ENCODE measurements at regions of chr1 and their contacts with region 1.

Region 1: DNA sequence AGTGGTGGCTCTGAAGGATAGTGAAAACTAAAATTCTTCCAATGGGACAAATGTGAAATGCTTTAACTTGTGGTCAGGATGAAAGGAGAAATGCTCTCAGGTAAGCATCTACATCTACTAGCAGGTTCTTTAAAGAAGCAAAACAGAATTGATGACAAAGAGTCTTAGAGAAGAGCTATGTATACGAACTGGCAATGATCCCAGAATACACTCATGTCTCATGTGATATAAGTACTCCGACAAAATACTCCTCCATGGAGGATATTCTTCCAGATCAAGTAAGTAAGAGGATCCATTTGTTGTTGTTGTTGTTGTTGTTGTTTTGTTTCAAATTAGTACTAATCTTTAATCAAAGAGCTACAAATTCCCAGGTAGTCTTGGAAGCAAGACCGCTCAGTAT is 174.0 kb upstream of the ATP1B1 start:
- DNase-seq: no peak
- H3K4me3 ChIP-seq: no peak overlapping the region
- H3K27ac ChIP-seq: no peak overlapping the region
- H3K4me1 ChIP-seq: no peaks in the 10 kb centered on the region
- H3K27me3 ChIP-seq: no peaks in the 10 kb centered on the region
- CTCF ChIP-seq: no peak

Region 2: DNA sequence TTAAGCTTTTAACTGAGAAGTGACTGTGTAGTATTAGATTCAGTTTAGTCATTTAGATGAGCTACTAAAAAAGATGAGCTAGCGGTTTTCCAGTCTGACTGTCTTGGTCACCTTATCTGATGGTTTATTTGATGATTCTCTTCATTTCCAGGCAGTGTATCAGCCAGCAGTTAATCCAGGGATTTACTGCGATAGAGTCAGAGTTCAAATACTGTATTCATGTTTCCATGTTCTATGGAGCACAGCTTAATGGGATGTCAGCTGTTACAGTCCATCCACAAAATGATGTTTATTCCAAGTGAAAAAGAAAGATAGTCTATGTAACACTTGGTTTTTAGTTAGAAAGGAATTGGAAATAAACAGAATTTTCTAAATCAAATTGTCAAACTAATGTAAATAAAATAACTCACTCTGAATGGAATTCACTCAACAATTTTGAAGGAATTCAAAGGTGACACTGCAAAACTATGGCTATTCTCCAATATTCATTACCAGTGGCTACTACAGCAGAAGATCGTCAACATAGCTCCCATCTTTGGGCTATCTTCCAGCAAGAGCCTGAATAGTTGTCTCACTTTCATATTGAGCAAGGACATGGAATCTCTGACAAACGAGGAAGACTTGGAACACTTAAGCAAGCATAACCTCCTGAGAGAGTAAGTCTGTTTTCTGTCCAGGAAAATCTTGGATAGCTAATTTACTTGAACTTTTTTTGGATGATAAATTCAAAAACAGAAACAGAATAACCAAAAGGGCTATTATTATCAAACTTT is 148.9 kb before region 1 on chr1:
- intact Hi-C with region 1: no loop called
- DNase-seq: no peak
- H3K4me3 ChIP-seq: no peak overlapping the region
- H3K27ac ChIP-seq: no peak overlapping the region
- H3K4me1 ChIP-seq: peaks cover 3% of the 10 kb centered on the region
- H3K27me3 ChIP-seq: no peaks in the 10 kb centered on the region
- CTCF ChIP-seq: no peak

Region 3: GRCh38 chr1:168980656-168981055 is 48.1 kb after region 1 on chr1:
- intact Hi-C with region 1: loop called (anchors 5 kb)
- DNase-seq: no peak
- H3K4me3 ChIP-seq: no peak overlapping the region
- H3K27ac ChIP-seq: no peak overlapping the region
- H3K4me1 ChIP-seq: no peaks in the 10 kb centered on the region
- H3K27me3 ChIP-seq: no peaks in the 10 kb centered on the region
- CTCF ChIP-seq: no peak